Gastrocnemius medialis (tissue), 4 donors: ENCODE measurements at regions of chr7 and their contacts with region 1.

Region 1: GRCh38 chr7:67771846-67772605 is 775.4 kb downstream of the TYW1 start:
- DNase-seq: no peak
- ATAC-seq: no peak
- H3K4me3 ChIP-seq: no peak overlapping the region
- H3K27ac ChIP-seq: no peak overlapping the region
- H3K4me1 ChIP-seq: no peaks in the 10 kb centered on the region
- H3K27me3 ChIP-seq: no peaks in the 10 kb centered on the region
- CTCF ChIP-seq: no peak
- POLR2A ChIP-seq: no peak

Region 2: GRCh38 chr7:67803789-67804188 is 31.8 kb after region 1 on chr7:
- in situ Hi-C with region 1: no loop called
- intact Hi-C with region 1: no loop called
- DNase-seq: no peak
- ATAC-seq: no peak
- H3K4me3 ChIP-seq: no peak overlapping the region
- H3K27ac ChIP-seq: no peak overlapping the region
- H3K4me1 ChIP-seq: no peaks in the 10 kb centered on the region
- H3K27me3 ChIP-seq: no peaks in the 10 kb centered on the region
- CTCF ChIP-seq: no peak
- POLR2A ChIP-seq: no peak

Region 3: GRCh38 chr7:68671046-68671445 is 899.0 kb after region 1 on chr7:
- in situ Hi-C with region 1: no loop called
- intact Hi-C with region 1: loop called (anchors 5 kb)
- DNase-seq: no peak
- ATAC-seq: no peak
- H3K4me3 ChIP-seq: no peak overlapping the region
- H3K27ac ChIP-seq: no peak overlapping the region
- H3K4me1 ChIP-seq: no peaks in the 10 kb centered on the region
- H3K27me3 ChIP-seq: no peaks in the 10 kb centered on the region
- CTCF ChIP-seq: no peak
- POLR2A ChIP-seq: no peak